ENCODE measurements at regions of chr11 and their contacts with region 1.

Region 1: DNA sequence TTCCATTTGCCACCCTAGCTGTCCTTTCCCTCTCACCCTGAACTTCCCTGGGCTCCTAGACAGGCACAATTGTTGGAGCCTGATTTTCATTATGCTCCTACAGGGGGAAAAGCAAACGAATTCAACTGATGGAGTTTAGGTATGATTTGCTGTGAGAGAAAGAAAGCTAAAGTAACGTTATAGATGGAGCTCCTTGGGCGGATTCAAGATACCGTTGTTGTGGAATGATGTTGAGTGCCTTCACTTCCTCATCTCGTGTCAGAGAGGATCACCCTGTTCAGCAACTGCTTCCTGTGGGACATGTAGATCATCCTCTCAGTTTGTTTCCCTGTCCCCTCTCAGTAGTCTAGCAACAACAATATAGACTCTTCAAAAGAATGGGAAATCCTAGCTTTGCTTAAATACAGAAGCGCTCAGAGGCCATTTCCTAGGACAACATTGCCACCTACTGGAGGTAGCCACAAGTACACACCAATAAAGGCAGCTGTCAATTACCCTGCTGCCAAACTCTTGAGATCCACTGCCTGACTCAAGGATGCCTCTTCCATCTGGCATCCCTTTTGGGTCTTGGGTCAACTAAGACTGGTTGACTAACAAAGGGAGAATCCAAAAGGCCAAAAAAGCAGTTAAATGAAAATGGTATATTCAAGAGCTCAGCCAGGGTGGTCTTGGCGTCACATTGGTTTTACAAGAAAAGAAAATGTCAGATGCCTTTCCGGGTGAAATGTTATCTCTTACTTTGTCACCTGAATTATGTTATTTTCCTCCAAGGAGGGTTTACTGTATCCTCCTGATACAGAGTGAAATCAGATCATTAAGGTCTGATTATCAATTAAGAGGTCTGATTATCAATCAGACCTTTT is 13.5 kb upstream of the DTX4 start:
- DNase-seq: peak; percentile 31 to 88
- ATAC-seq: peak; percentile 94 to 99 (median 99)
- H3K4me3 ChIP-seq: no peak overlapping the region
- H3K4me3 Mint-ChIP-seq: no peak overlapping the region
- H3K27ac ChIP-seq: no peak overlapping the region
- H3K27ac Mint-ChIP-seq: no peak overlapping the region
- H3K4me1 ChIP-seq: peaks cover 4% of the 10 kb centered on the region
- H3K4me1 Mint-ChIP-seq: peaks cover 8 to 9% of the 10 kb centered on the region in 2 donors
- H3K27me3 ChIP-seq: no peaks in the 10 kb centered on the region
- H3K27me3 Mint-ChIP-seq: peaks cover 0 to 5% of the 10 kb centered on the region in 2 donors
- CTCF ChIP-seq: peak; percentile 75

Region 2: GRCh38 chr11:58654079-58654907 is 504.1 kb before region 1 on chr11:
- intact Hi-C with region 1: loop called (anchors 1 kb)
- DNase-seq: peak; percentile 64 to 87
- ATAC-seq: peak; percentile 91 to 100 (median 99)
- H3K4me3 ChIP-seq: no peak overlapping the region
- H3K4me3 Mint-ChIP-seq: no peak overlapping the region
- H3K27ac ChIP-seq: no peak overlapping the region
- H3K27ac Mint-ChIP-seq: no peak overlapping the region
- H3K4me1 ChIP-seq: no peaks in the 10 kb centered on the region
- H3K4me1 Mint-ChIP-seq: peaks cover 0 to 5% of the 10 kb centered on the region in 2 donors
- H3K27me3 ChIP-seq: no peaks in the 10 kb centered on the region
- H3K27me3 Mint-ChIP-seq: peaks cover 0 to 6% of the 10 kb centered on the region in 2 donors
- CTCF ChIP-seq: peak; percentile 86

Region 3: GRCh38 chr11:58691675-58692074 is 466.8 kb before region 1 on chr11:
- intact Hi-C with region 1: no loop called
- DNase-seq: no peak
- ATAC-seq: no peak
- H3K4me3 ChIP-seq: no peak overlapping the region
- H3K4me3 Mint-ChIP-seq: no peak overlapping the region
- H3K27ac ChIP-seq: no peak overlapping the region
- H3K27ac Mint-ChIP-seq: no peak overlapping the region
- H3K4me1 ChIP-seq: no peaks in the 10 kb centered on the region
- H3K4me1 Mint-ChIP-seq: no peaks in the 10 kb centered on the region
- H3K27me3 ChIP-seq: no peaks in the 10 kb centered on the region
- H3K27me3 Mint-ChIP-seq: peaks cover 0 to 4% of the 10 kb centered on the region in 2 donors
- CTCF ChIP-seq: no peak

Region 4: GRCh38 chr11:58845366-58845765 is 313.1 kb before region 1 on chr11:
- intact Hi-C with region 1: loop called (anchors 5 kb)
- DNase-seq: no peak
- ATAC-seq: no peak
- H3K4me3 ChIP-seq: no peak overlapping the region
- H3K4me3 Mint-ChIP-seq: no peak overlapping the region
- H3K27ac ChIP-seq: no peak overlapping the region
- H3K27ac Mint-ChIP-seq: no peak overlapping the region
- H3K4me1 ChIP-seq: no peaks in the 10 kb centered on the region
- H3K4me1 Mint-ChIP-seq: no peaks in the 10 kb centered on the region
- H3K27me3 ChIP-seq: no peaks in the 10 kb centered on the region
- H3K27me3 Mint-ChIP-seq: peaks cover 8 to 13% of the 10 kb centered on the region in 2 donors
- CTCF ChIP-seq: no peak

Region 5: DNA sequence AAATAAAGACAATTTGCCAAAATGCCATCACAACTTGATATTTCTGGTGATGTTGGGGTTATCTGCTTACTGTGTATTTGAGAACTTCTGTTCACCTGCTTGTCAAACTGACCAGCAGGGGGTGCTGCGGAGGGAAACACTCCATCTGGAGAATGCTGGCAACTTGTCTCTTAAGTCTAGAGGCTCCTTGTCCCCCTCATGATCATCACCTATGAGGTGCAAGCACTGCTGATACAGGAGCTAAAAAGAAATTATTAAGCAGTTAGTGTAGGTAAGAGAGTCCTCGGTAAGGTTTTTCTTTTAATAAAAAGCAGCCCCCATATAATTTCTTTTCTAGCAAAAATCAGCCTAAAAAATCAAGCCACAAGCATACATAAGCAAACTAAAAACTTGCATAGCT is 105.0 kb before region 1 on chr11:
- intact Hi-C with region 1: loop called (anchors 1 kb)
- DNase-seq: peak; percentile 67 to 88
- ATAC-seq: peak; percentile 67 to 79 (median 78)
- H3K4me3 ChIP-seq: no peak overlapping the region
- H3K4me3 Mint-ChIP-seq: no peak overlapping the region
- H3K27ac ChIP-seq: no peak overlapping the region
- H3K27ac Mint-ChIP-seq: no peak overlapping the region
- H3K4me1 ChIP-seq: peaks cover 6% of the 10 kb centered on the region
- H3K4me1 Mint-ChIP-seq: peaks cover 6% of the 10 kb centered on the region in 2 donors
- H3K27me3 ChIP-seq: no peaks in the 10 kb centered on the region
- H3K27me3 Mint-ChIP-seq: peaks cover 8 to 50% of the 10 kb centered on the region in 2 donors
- CTCF ChIP-seq: peak; percentile 73

Region 6: DNA sequence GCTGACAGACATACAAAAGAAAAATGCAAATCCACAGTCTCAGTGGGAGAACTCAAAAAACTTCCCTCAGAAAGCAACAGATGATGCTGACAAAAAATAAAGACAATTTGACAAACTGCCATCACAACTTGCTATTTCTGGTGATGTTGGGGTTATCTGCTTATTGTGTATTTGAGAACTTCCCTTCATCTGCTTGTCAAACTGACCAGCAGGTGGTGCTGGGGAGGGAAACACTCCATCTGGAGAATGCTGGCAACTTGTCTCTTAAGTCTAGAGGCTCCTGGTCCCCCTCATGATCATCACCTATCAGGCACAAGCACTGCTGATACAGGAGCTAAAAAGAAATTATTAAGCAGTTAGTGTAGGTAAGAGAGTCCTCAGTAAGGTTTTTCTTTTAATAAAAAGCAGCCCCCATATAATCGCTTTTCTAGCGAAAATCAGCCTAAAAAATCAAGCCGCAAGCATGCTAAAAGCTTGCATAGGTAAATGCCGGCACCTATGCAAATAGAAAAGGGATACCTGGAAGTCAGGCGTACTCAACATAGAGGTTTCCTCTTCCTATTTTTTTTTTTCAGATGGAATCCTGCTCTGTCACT is 61.2 kb before region 1 on chr11:
- intact Hi-C with region 1: loop called (anchors 1 kb)
- DNase-seq: peak; percentile 49 to 86
- ATAC-seq: peak; percentile 56 to 82 (median 80)
- H3K4me3 ChIP-seq: no peak overlapping the region
- H3K4me3 Mint-ChIP-seq: no peak overlapping the region
- H3K27ac ChIP-seq: no peak overlapping the region
- H3K27ac Mint-ChIP-seq: no peak overlapping the region
- H3K4me1 ChIP-seq: peaks cover 8% of the 10 kb centered on the region
- H3K4me1 Mint-ChIP-seq: peaks cover 4 to 8% of the 10 kb centered on the region in 2 donors
- H3K27me3 ChIP-seq: peaks cover 2% of the 10 kb centered on the region
- H3K27me3 Mint-ChIP-seq: peaks cover 17 to 39% of the 10 kb centered on the region in 2 donors
- CTCF ChIP-seq: peak; percentile 66

Measured in natural killer cell (primary cell).